Activated T-helper 1 cell treated with anti-CD3 and anti-CD28 coated beads, Interleukin-12 subunit alpha, Interleukin-12 subunit beta, Interleukin-2, Interleukin-4 antibody, amounts not matched to agents 30 ng/mL and 10 ng/mL and 1 ng/mL, durations not matched to agents 14 hours and 24 hours and 36 hours (primary cell): ENCODE measurements at regions of chr5 and their contacts with region 1.

Region 1: GRCh38 chr5:95961617-95962474 is at the start of gene ELL2:
- DNase-seq: peak; percentile 96
- H3K4me3 Mint-ChIP-seq: peak within 1 kb of the TSS; percentile 100
- H3K27ac Mint-ChIP-seq: peak within 1 kb of the TSS; percentile 99
- H3K4me1 Mint-ChIP-seq: peaks cover 55% of the 10 kb centered on the region
- H3K27me3 Mint-ChIP-seq: no peaks in the 10 kb centered on the region
- total RNA-seq, gene ELL2: 93.9 and 97.6 TPM in 2 replicates

Region 2: GRCh38 chr5:95631991-95632675 is 329.7 kb before region 1 on chr5:
- intact Hi-C with region 1: loop called (anchors 5 kb)
- DNase-seq: peak; percentile 59
- H3K4me3 Mint-ChIP-seq: peak overlapping the region; percentile 4
- H3K27ac Mint-ChIP-seq: peak overlapping the region; percentile 83
- H3K4me1 Mint-ChIP-seq: peaks cover 13% of the 10 kb centered on the region
- H3K27me3 Mint-ChIP-seq: peaks cover 8% of the 10 kb centered on the region

Region 3: GRCh38 chr5:95892780-95893354 is 69.0 kb before region 1 on chr5:
- intact Hi-C with region 1: loop called (anchors 2 kb)
- DNase-seq: peak; percentile 15
- H3K4me3 Mint-ChIP-seq: no peak overlapping the region
- H3K27ac Mint-ChIP-seq: no peak overlapping the region
- H3K4me1 Mint-ChIP-seq: peaks cover 25% of the 10 kb centered on the region
- H3K27me3 Mint-ChIP-seq: no peaks in the 10 kb centered on the region

Region 4: GRCh38 chr5:95984287-95984938 is 22.6 kb after region 1 on chr5:
- intact Hi-C with region 1: no loop called
- DNase-seq: no peak
- H3K4me3 Mint-ChIP-seq: no peak overlapping the region
- H3K27ac Mint-ChIP-seq: no peak overlapping the region
- H3K4me1 Mint-ChIP-seq: no peaks in the 10 kb centered on the region
- H3K27me3 Mint-ChIP-seq: no peaks in the 10 kb centered on the region

Region 5: DNA sequence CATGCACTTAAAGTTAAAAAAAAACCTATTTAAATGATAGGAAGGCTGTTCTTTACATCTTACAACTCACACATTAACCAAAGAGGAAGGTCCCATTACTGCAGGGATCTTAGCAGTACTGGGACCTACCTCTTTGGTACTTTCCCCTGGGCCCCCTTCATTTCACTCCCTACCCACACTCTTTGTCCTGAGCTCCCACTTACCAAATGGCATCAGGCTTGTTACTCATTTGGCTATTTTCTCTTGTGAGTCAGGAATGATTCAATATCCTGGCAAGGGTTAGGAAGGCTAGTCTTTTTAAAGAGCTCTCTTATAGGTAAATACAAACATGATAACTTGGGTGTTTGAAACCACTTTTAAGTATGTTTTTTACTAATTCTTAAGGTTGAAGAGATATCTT is 117.2 kb after region 1 on chr5:
- intact Hi-C with region 1: loop called (anchors 1 kb)
- DNase-seq: no peak
- H3K4me3 Mint-ChIP-seq: no peak overlapping the region
- H3K27ac Mint-ChIP-seq: peak overlapping the region; percentile 73
- H3K4me1 Mint-ChIP-seq: peaks cover 53% of the 10 kb centered on the region
- H3K27me3 Mint-ChIP-seq: no peaks in the 10 kb centered on the region

Region 6: GRCh38 chr5:96336351-96336985 is 374.6 kb after region 1 on chr5:
- intact Hi-C with region 1: loop called (anchors 1 kb)
- DNase-seq: peak; percentile 51
- H3K4me3 Mint-ChIP-seq: no peak overlapping the region
- H3K27ac Mint-ChIP-seq: no peak overlapping the region
- H3K4me1 Mint-ChIP-seq: peaks cover 10% of the 10 kb centered on the region
- H3K27me3 Mint-ChIP-seq: peaks cover 12% of the 10 kb centered on the region

Region 7: GRCh38 chr5:96807075-96807654 is 845.3 kb after region 1 on chr5:
- intact Hi-C with region 1: loop called (anchors 5 kb)
- DNase-seq: no peak
- H3K4me3 Mint-ChIP-seq: peak overlapping the region; percentile 99
- H3K27ac Mint-ChIP-seq: peak overlapping the region; percentile 95
- H3K4me1 Mint-ChIP-seq: peaks cover 81% of the 10 kb centered on the region
- H3K27me3 Mint-ChIP-seq: no peaks in the 10 kb centered on the region